Caco-2 (cell line): ENCODE measurements at regions of chr1 and their contacts with region 1.

Region 1: DNA sequence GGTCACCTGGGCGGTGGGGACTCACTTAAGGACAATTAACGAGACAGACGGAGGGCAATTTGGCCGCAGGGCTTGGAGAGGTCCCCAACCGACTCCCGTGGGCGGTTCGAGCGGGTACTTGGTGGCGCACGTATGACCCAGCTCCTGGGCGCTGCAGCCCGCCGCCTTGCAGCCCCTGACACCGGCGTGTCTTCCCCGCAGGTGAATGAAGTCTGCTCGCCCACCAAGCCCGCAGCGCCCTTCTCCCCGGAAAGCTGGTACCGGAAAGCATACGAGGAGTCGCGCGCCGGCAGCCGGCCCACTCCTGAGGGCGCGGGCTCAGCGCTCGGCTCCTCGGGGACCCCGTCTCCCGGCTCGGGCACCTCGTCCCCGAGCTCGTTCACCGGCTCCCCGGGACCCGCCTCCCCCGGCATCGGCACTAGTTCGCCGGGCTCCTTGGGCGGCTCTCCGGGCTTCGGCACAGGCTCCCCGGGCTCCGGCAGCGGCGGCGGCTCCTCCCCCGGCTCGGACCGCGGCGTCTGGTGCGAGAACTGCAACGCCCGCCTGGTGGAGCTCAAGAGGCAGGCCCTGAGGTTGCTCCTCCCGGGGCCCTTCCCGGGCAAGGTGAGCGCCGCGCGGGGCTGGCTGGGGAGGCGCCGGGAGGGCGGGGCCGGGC is 1.4 kb downstream of the KIF26B start:
- DNase-seq: peak; percentile 89 to 94
- H3K4me3 ChIP-seq: peak overlapping the region; percentile 63
- H3K4me3 Mint-ChIP-seq: peak overlapping the region; percentile 97
- H3K27ac Mint-ChIP-seq: no peak overlapping the region
- H3K4me1 ChIP-seq: peaks cover 8% of the 10 kb centered on the region
- H3K4me1 Mint-ChIP-seq: no peaks in the 10 kb centered on the region
- H3K27me3 ChIP-seq: no peaks in the 10 kb centered on the region; the same call in none of the 2 replicates
- H3K27me3 Mint-ChIP-seq: peaks cover 7% of the 10 kb centered on the region
- CTCF ChIP-seq: peak; percentile 82 to 84

Region 2: GRCh38 chr1:245183429-245183828 is 27.2 kb after region 1 on chr1:
- CTCF ChIA-PET with region 1: no interaction called
- POLR2A ChIA-PET with region 1: no interaction called
- intact Hi-C with region 1: no loop called
- DNase-seq: no peak
- H3K4me3 ChIP-seq: no peak overlapping the region
- H3K4me3 Mint-ChIP-seq: no peak overlapping the region
- H3K27ac Mint-ChIP-seq: no peak overlapping the region
- H3K4me1 ChIP-seq: no peaks in the 10 kb centered on the region
- H3K4me1 Mint-ChIP-seq: no peaks in the 10 kb centered on the region
- H3K27me3 ChIP-seq: no peaks in the 10 kb centered on the region
- H3K27me3 Mint-ChIP-seq: no peaks in the 10 kb centered on the region
- CTCF ChIP-seq: no peak

Region 3: DNA sequence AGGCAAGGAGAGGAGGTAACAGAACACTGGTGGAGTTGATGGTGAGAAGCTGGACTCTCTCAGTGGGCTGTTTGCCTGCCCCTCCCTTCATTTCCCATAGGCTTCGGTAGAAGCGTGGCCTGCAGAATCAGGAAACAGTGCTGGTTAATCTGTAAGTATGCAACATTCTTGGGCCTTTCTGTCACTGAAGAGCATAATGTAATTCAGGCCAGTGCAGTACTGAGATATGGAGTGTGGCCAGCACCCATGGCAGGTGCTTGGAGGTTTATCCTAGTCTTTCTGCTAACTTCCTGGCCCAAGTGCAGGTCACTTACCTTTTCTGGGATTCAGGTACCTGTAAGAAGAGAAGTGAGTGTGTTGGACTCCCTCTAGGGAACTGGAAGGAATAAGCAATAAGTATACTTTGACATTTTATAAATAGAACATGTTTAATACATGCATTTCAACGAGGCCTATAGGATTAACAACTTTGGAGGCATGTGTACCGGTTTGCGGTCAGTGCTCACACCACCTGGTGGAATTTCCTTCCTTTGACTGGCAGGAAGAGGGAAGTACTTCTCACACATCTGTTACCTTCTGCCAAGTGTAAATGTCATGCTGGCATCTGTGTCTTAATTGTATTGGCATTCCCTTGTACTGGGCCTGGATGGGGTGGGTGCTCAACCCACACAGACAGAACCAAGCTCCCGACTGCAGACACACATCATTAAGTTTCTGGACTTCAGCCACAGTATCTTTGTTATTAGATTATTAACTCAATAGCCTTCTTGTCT is 104.1 kb after region 1 on chr1:
- CTCF ChIA-PET with region 1: interaction called, 6 read pairs
- POLR2A ChIA-PET with region 1: no interaction called
- intact Hi-C with region 1: loop called (anchors 5 kb)
- DNase-seq: no peak
- H3K4me3 ChIP-seq: no peak overlapping the region
- H3K4me3 Mint-ChIP-seq: no peak overlapping the region
- H3K27ac Mint-ChIP-seq: no peak overlapping the region
- H3K4me1 ChIP-seq: peaks cover 24% of the 10 kb centered on the region
- H3K4me1 Mint-ChIP-seq: peaks cover 20% of the 10 kb centered on the region
- H3K27me3 ChIP-seq: no peaks in the 10 kb centered on the region
- H3K27me3 Mint-ChIP-seq: no peaks in the 10 kb centered on the region
- CTCF ChIP-seq: no peak

Region 4: GRCh38 chr1:245322673-245323441 is 166.6 kb after region 1 on chr1:
- CTCF ChIA-PET with region 1: no interaction called
- POLR2A ChIA-PET with region 1: interaction called, 3 read pairs
- intact Hi-C with region 1: loop called (anchors 10 kb)
- DNase-seq: no peak
- H3K4me3 ChIP-seq: no peak overlapping the region
- H3K4me3 Mint-ChIP-seq: no peak overlapping the region
- H3K27ac Mint-ChIP-seq: no peak overlapping the region
- H3K4me1 ChIP-seq: no peaks in the 10 kb centered on the region; the same call in 1 of the 2 replicates
- H3K4me1 Mint-ChIP-seq: peaks cover 4% of the 10 kb centered on the region
- H3K27me3 ChIP-seq: no peaks in the 10 kb centered on the region
- H3K27me3 Mint-ChIP-seq: no peaks in the 10 kb centered on the region
- CTCF ChIP-seq: peak in 1 of 2 experiments; percentile 24

Region 5: DNA sequence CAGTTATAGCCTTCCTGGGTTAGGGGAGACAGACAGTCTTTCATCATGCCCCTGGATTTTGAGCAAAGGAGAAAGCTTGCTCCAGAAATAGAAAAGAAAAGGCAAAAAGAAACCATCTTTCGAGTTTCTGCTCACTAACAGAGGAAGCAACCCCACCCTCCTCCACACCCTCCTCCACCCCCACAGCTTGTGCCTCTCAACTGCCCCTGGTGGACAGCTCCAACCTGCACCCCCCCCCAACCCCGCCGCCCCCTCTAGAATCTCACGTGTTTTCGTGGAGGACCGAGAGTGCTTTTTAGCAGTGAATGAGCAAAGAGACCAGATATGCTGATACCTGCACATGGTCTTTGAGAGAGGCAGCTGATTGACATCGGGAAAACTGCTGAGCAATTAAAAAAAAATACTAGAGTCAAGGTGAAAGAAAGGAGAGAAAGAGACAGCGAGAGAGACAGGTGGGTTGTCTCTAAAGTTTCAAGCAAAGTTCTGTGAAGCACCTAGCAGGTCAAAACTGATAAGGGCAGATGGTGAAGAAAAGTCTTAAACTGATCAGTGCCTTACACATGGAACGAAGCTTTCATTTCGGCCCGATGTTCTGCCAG is 356.9 kb after region 1 on chr1:
- CTCF ChIA-PET with region 1: interaction called, 3 read pairs
- POLR2A ChIA-PET with region 1: no interaction called
- intact Hi-C with region 1: loop called (anchors 10 kb)
- DNase-seq: peak in 1 of 2 experiments; percentile 8
- H3K4me3 ChIP-seq: no peak overlapping the region
- H3K4me3 Mint-ChIP-seq: no peak overlapping the region
- H3K27ac Mint-ChIP-seq: no peak overlapping the region
- H3K4me1 ChIP-seq: no peaks in the 10 kb centered on the region
- H3K4me1 Mint-ChIP-seq: peaks cover 16% of the 10 kb centered on the region
- H3K27me3 ChIP-seq: no peaks in the 10 kb centered on the region
- H3K27me3 Mint-ChIP-seq: no peaks in the 10 kb centered on the region
- CTCF ChIP-seq: no peak

Region 6: DNA sequence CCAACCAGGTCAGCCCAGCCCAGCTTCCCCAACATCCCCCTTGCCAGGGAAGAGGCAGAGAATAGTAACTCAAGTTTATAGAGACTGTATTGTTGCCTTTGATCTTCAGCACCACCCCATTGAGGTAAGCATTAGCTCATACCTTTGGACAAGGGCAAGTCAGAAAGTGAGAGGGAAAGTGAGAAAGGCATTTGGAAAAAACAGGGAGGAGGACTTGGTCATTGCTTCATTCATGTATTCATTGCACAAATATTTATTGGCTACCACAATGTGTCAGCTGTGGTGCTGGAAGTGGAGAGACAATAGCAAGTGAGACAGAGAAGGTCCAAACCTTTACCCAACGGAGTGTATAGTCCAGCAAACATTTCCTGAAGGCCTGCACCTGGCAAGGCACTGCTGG is 559.8 kb after region 1 on chr1:
- CTCF ChIA-PET with region 1: no interaction called
- POLR2A ChIA-PET with region 1: no interaction called
- intact Hi-C with region 1: loop called (anchors 10 kb)
- DNase-seq: peak in 1 of 2 experiments; percentile 16
- H3K4me3 ChIP-seq: no peak overlapping the region
- H3K4me3 Mint-ChIP-seq: no peak overlapping the region
- H3K27ac Mint-ChIP-seq: no peak overlapping the region
- H3K4me1 ChIP-seq: no peaks in the 10 kb centered on the region
- H3K4me1 Mint-ChIP-seq: no peaks in the 10 kb centered on the region
- H3K27me3 ChIP-seq: no peaks in the 10 kb centered on the region
- H3K27me3 Mint-ChIP-seq: no peaks in the 10 kb centered on the region
- CTCF ChIP-seq: no peak

Region 7: DNA sequence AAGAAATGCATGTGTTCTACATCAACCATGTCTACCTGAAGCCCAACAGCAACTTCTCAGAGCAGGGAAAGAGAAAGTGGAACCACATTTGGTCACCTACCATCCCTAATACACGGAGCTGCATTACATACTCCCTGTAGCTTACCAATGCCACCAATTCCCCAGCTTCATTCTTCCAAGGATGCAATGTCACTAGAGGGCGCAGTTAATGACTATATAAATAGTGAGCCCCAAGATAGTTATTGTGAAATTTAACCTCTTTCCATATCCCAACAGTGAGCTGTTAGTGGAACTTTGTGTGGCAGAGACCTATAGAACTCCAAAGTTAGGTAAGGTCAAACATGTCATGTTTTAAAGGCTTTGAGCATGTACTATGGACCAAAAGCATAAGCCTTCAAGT is 732.6 kb after region 1 on chr1:
- CTCF ChIA-PET with region 1: interaction called, 4 read pairs
- POLR2A ChIA-PET with region 1: no interaction called
- intact Hi-C with region 1: loop called (anchors 1 kb)
- DNase-seq: peak in 1 of 2 experiments; percentile 39
- H3K4me3 ChIP-seq: no peak overlapping the region
- H3K4me3 Mint-ChIP-seq: no peak overlapping the region
- H3K27ac Mint-ChIP-seq: no peak overlapping the region
- H3K4me1 ChIP-seq: no peaks in the 10 kb centered on the region
- H3K4me1 Mint-ChIP-seq: no peaks in the 10 kb centered on the region
- H3K27me3 ChIP-seq: no peaks in the 10 kb centered on the region
- H3K27me3 Mint-ChIP-seq: no peaks in the 10 kb centered on the region
- CTCF ChIP-seq: peak; percentile 10 to 51